ENCODE measurements at regions of chrX and their contacts with region 1.

Region 1: DNA sequence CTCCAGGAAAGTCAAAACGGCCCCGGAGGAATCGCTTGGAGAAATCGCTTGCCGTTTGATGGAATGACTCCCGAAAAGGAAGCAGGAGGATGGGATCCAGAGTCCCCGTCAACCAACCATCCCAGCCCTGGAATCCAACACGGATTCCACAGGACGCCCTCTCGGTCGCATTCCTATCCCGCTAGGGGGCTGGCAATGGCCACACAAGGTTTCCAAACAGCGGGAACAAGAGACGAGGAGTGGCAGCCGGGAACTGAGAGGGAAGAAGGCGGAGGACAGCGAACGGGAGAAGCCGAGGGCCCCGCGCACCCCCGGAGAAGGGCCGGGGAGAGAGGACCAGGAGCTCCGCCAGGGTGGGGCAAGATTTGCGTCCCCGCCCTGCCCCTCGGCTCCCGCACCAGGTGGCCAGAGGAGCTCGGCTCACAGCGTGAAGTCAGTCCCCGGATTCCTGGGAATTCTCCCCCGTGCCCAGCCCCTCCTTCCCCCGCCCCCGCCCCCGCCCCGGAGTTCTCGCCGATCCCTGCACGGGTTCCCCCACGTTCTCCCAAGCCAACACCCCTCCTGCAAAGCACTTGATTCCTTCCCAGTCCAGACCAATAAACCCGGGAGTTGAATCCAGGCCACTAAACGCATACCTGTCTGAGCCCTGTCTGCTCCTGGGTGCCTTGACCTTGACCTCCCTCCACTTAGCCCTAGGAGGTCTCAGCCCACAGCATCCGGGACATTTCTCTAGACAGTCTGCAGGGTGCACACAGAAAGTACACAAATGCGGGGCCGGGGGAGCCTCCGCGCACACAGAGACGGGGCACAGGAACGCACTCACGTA is 1.4 kb downstream of the PDZD4 start:
- DNase-seq: peak in 1 of 2 experiments; percentile 69
- H3K4me3 ChIP-seq: peak overlapping the region; percentile 52 to 78 (median 58)
- H3K27ac ChIP-seq: peak overlapping the region; percentile 29; the same call in 1 of the 2 replicates
- H3K4me1 ChIP-seq: peaks cover 6 to 22% (median 15%) of the 10 kb centered on the region in 4 experiments; a peak in 6 of 7 replicates
- H3K27me3 ChIP-seq: peaks cover 0 to 6% (median 2%) of the 10 kb centered on the region in 4 experiments; a peak in 3 of 7 replicates
- CTCF ChIP-seq: no peak
- EP300 ChIP-seq: no peak
- POLR2A ChIP-seq: no peak
- RAD21 ChIP-seq: no peak

Region 2: DNA sequence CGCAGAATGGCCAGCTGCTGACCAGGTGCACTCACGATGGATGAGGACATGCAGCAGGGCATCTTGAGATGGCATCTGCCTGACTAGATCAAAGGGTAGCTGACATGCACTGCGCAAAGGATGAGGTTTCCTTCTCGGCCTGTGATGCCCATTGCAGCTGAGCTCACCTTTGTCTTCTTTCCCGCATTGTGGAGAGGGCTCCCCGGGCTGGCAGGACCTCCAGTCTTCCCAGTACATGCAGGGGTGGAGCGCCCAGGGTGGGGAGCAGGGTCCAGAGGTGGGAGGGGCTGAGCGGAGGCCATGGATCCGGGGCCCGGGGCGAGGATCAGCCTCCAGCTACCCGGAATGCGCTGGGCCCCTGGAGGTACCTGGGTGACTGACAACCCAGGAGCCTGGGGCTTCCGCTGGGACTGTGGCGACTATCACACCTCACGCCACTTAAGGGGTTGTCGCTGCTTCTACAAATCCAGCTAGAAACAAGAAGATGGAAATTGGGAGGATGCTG is 395.1 kb before region 1 on chrX:
- CTCF ChIA-PET with region 1: no interaction called
- POLR2A ChIA-PET with region 1: no interaction called
- DNase-seq: no peak
- H3K4me3 ChIP-seq: no peak overlapping the region
- H3K27ac ChIP-seq: no peak overlapping the region
- H3K4me1 ChIP-seq: no peaks in the 10 kb centered on the region
- H3K27me3 ChIP-seq: no peaks in the 10 kb centered on the region
- CTCF ChIP-seq: no peak
- EP300 ChIP-seq: no peak
- POLR2A ChIP-seq: no peak
- RAD21 ChIP-seq: no peak

Region 3: DNA sequence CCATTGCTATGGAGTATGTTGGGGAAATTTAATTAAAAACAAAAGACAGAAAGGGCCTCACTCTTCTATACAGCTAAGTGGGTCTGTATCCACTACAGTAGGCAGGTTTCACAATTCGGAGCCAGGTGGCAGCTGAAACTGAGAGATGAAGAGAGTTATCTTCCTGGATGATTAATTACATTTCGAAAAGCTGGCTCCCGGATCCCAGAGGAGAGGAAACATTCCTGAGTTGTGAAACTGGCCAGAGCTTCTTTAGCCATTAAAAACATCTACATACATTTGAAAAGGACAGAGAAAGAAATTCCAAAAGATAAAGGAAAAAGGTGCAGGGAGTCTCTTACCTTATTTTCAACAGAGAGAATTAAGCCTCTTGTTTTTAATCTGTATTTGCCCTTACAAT is 16.9 kb after region 1 on chrX:
- CTCF ChIA-PET with region 1: interaction called, 5 read pairs
- POLR2A ChIA-PET with region 1: interaction called, 13 read pairs
- DNase-seq: no peak
- H3K4me3 ChIP-seq: peak overlapping the region in 1 of 4 experiments; percentile 45; a peak in 2 of 8 replicates
- H3K27ac ChIP-seq: no peak overlapping the region
- H3K4me1 ChIP-seq: peaks cover 0 to 12% (median 3%) of the 10 kb centered on the region in 4 experiments; a peak in 5 of 7 replicates
- H3K27me3 ChIP-seq: no peaks in the 10 kb centered on the region
- CTCF ChIP-seq: no peak
- EP300 ChIP-seq: no peak
- POLR2A ChIP-seq: no peak
- RAD21 ChIP-seq: no peak